Posterior vena cava (tissue), 2 donors: ENCODE measurements at regions of chr14 and their contacts with region 1.

Region 1: DNA sequence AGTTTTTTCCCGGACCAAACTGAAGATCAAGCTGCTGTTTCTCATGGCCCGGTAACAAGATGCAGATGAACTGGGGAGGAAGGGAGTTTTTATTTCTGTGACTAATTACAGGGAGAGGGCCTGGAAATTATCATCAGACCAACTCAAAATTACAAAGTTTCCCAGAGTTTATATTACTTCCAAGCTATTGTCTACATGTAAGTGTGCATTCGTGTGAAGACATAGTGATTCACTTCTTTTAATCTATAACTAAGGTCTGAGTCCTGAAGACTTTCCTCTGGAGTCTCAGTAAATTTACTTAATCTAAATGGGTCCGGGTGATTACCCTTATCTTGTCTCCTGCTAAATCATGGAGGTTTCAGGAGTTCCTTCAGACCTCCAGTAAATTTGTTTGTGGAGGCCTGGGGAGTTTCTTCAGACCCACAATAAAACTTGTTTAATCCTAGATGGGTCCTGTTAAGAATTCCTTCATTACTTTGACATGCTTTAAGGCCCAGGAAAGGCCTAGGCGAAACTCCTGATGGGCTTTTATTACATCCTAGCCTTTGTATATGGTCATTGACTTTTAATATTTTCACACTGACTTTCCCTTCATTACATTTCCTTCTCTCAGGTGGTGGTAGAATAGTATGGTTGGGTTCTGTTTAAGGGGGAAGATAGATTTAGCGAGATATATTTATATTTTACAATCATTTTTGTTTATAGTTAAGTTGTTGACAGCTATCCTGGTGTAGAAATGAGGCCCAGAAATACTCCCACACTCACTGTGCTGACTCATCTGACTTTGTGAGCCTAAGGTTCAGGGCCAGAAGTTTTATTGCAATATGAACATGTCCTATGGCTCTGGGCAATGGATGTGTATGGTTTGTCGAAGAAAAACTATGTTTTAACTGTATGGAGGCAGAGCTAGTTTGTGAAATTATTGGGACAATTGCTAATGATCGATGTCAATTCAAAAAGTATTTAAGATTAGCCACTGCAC is 627.0 kb upstream of the FBXO33 start:
- DNase-seq: no peak

Region 2: DNA sequence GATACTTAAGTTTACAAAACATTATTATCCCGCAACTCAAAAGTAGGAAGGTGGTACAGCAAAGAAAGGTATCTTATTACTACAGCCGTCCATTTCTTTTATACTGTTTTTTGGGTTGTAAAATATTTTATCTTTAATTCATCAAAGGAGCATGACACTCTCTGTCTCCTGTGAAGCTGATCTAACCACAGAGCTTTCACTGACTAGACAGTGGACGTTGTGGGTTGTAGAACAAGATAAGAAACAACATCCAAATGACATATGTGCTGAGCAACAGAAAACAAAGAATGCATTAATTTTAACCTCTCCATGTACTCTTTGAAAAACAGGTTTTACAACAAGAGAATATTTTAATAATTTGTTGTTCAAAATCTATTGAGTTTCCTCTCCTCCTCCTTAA is 431.1 kb before region 1 on chr14:
- intact Hi-C with region 1: no loop called
- DNase-seq: no peak

Region 3: DNA sequence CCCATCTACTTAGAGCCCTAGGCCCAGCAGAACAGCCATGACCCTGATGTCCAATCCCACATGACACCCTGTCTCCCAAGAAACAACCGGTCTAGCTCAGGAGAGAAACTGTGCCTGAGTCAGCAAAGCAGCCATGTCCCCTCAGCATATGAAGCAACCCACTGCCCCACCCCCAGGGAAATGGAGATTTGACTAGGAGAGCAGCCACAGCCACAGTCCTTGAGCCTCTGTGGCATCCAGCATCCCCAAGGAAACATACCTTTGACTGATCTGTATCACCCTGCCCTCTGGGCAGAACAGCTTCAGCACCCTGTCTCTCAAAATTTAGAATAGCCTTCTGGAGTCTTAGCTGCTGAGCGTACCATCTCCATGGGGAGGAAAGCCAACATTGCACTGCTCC is 15.0 kb after region 1 on chr14:
- intact Hi-C with region 1: loop called in 1 of 2 experiments (anchors 1 kb)
- DNase-seq: no peak